Activated CD8-positive, alpha-beta T cell treated with anti-CD3 and anti-CD28 coated beads, Interleukin-2, amount 10 ng/mL, durations not matched to agents 7 days and 5 days (primary cell): ENCODE measurements at regions of chr6 and their contacts with region 1.

Region 1: DNA sequence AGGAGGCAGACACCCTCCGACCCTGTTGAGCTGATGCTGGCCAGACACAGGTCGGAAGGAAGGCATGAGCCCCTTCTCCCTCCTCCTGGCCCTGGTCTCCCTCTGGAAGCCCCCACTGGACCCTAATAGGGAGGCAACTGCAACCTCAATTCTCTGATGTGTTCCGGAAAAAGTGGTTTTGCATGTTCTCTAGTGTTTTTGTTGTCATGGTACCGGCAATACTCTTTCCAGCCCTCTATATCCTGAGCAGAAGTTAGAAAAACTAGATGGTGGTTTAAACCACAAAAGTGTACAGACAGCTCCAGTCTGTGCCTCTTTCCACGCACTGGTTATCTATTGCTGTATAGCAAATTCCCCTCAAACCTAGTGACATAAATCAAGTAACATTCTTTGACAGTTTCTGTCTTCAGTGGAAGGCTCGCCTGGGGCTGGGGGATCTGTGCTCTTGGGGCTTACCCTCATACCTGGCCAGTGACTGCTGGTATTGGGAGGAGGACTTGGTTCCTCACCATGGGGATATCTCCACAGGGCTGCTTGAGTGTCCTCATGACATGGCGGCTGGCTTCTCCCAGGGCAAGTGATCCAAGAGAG is 37.0 kb downstream of the SYTL3 start:
- DNase-seq: peak; percentile 66
- ATAC-seq: peak; percentile 94
- H3K4me3 Mint-ChIP-seq: peak overlapping the region; percentile 39
- H3K27ac Mint-ChIP-seq: peak overlapping the region; percentile 88
- H3K4me1 Mint-ChIP-seq: peaks cover 65% of the 10 kb centered on the region
- H3K27me3 Mint-ChIP-seq: no peaks in the 10 kb centered on the region

Region 2: GRCh38 chr6:158631678-158632537 is 55.0 kb before region 1 on chr6:
- CTCF ChIA-PET with region 1: interaction called, 12 read pairs
- POLR2A ChIA-PET with region 1: no interaction called
- DNase-seq: peak; percentile 18
- ATAC-seq: no peak
- H3K4me3 Mint-ChIP-seq: no peak overlapping the region
- H3K27ac Mint-ChIP-seq: peak overlapping the region; percentile 61
- H3K4me1 Mint-ChIP-seq: peaks cover 59% of the 10 kb centered on the region
- H3K27me3 Mint-ChIP-seq: no peaks in the 10 kb centered on the region

Region 3: GRCh38 chr6:158644231-158645063 is 42.4 kb before region 1 on chr6 and contains the start of gene DYNLT1:
- CTCF ChIA-PET with region 1: interaction called, 38 read pairs
- POLR2A ChIA-PET with region 1: interaction called, 9 read pairs
- DNase-seq: peak; percentile 91
- ATAC-seq: peak; percentile 74
- H3K4me3 Mint-ChIP-seq: peak within 1 kb of the TSS; percentile 99
- H3K27ac Mint-ChIP-seq: peak within 1 kb of the TSS; percentile 97
- H3K4me1 Mint-ChIP-seq: peaks cover 71% of the 10 kb centered on the region
- H3K27me3 Mint-ChIP-seq: no peaks in the 10 kb centered on the region
- total RNA-seq, gene DYNLT1: 79.0 to 86.4 TPM

Region 4: DNA sequence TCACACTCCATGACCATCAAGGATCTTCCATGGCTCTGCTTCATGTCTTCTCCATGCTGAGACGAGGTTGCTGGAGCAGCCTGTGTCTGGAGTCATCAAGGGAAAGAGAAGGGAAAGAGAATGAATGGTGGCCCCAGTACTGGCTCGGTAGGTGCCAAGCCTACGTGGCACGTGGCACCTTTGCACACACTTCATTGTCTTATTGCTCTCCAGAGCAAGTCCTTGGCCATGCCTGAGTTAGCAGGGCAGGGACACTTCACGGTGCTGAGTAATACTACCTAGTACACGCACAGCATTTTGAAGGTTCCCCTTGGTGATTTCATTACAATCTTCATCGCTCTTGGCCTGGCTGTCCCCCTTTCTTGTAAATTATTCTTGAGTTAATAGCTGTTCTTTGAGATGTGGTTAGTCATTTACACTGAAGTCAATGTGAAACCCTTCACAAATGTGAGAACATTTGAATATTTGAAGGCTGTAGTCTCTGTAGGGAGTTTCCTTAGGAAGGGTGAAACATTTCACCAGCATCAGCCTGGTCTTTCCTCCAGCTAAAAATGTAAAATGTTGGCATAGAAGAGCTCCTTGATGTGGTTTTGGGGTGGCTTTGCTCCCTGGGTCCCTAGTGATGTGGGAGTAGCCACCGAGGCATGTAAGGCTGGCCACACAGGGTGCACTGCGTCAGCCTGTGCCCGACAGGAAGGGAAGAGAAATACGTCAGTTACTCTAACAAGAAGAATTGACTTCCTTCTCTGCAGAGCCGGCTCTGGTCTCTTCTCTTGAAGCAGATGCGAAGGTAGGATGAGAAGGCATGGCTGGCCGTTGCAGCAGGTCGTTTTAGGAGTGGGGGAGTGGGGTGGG is 37.4 kb before region 1 on chr6 and contains the start of gene SYTL3:
- CTCF ChIA-PET with region 1: interaction called, 38 read pairs
- POLR2A ChIA-PET with region 1: interaction called, 9 read pairs
- DNase-seq: peak; percentile 88
- ATAC-seq: peak; percentile 61
- H3K4me3 Mint-ChIP-seq: peak within 1 kb of the TSS; percentile 75
- H3K27ac Mint-ChIP-seq: peak within 1 kb of the TSS; percentile 95
- H3K4me1 Mint-ChIP-seq: peaks cover 75% of the 10 kb centered on the region
- H3K27me3 Mint-ChIP-seq: no peaks in the 10 kb centered on the region
- total RNA-seq, gene SYTL3: 43.5 to 48.3 TPM

Region 5: GRCh38 chr6:158660333-158660754 is 26.5 kb before region 1 on chr6:
- CTCF ChIA-PET with region 1: interaction called, 154 read pairs
- POLR2A ChIA-PET with region 1: interaction called, 5 read pairs
- DNase-seq: peak; percentile 66
- ATAC-seq: peak; percentile 69
- H3K4me3 Mint-ChIP-seq: no peak overlapping the region
- H3K27ac Mint-ChIP-seq: peak overlapping the region; percentile 60
- H3K4me1 Mint-ChIP-seq: peaks cover 62% of the 10 kb centered on the region
- H3K27me3 Mint-ChIP-seq: no peaks in the 10 kb centered on the region

Region 6: GRCh38 chr6:158704181-158704822 is 17.4 kb after region 1 on chr6:
- CTCF ChIA-PET with region 1: interaction called, 17 read pairs
- POLR2A ChIA-PET with region 1: no interaction called
- DNase-seq: peak; percentile 79
- ATAC-seq: peak; percentile 98
- H3K4me3 Mint-ChIP-seq: peak overlapping the region; percentile 60
- H3K27ac Mint-ChIP-seq: peak overlapping the region; percentile 82
- H3K4me1 Mint-ChIP-seq: peaks cover 32% of the 10 kb centered on the region
- H3K27me3 Mint-ChIP-seq: no peaks in the 10 kb centered on the region

Region 7: DNA sequence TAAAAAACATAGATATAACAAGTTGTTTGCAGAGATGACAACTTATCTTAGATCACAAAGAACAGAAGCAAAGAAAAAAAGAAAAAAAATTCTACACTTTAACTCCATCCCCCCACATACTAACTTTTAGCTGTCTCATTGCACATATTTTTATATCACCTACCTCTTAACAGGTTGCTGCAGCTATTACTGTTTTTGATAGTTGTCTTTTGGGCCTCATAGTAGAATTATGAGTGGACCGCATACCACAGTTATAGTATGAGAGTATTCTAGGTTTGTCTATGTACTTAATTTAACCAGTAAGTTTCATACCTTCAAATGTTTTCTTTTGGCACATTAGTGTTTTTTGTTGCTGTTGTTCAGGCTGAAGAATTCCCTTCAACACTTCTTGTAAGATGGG is 300.8 kb after region 1 on chr6:
- CTCF ChIA-PET with region 1: no interaction called
- POLR2A ChIA-PET with region 1: no interaction called
- DNase-seq: no peak
- ATAC-seq: no peak
- H3K4me3 Mint-ChIP-seq: no peak overlapping the region
- H3K27ac Mint-ChIP-seq: no peak overlapping the region
- H3K4me1 Mint-ChIP-seq: peaks cover 14% of the 10 kb centered on the region
- H3K27me3 Mint-ChIP-seq: no peaks in the 10 kb centered on the region